ENCODE measurements at regions of chr12 and their contacts with region 1.

Region 1: GRCh38 chr12:49088190-49088931 is 6.2 kb downstream of the DHH start:
- DNase-seq: peak; percentile 93
- H3K4me3 ChIP-seq: peak overlapping the region; percentile 34
- H3K27ac ChIP-seq: no peak overlapping the region
- H3K4me1 ChIP-seq: peaks cover 9% of the 10 kb centered on the region
- H3K27me3 ChIP-seq: peaks cover 48% of the 10 kb centered on the region
- CTCF ChIP-seq: peak; percentile 96

Region 2: GRCh38 chr12:49060237-49061156 is 27.9 kb before region 1 on chr12 and contains the start of gene KMT2D:
- CTCF ChIA-PET with region 1: interaction called, 17 read pairs
- POLR2A ChIA-PET with region 1: no interaction called
- intact Hi-C with region 1: no loop called
- DNase-seq: peak; percentile 98
- H3K4me3 ChIP-seq: peak within 1 kb of the TSS; percentile 98
- H3K27ac ChIP-seq: peak within 1 kb of the TSS; percentile 100
- H3K4me1 ChIP-seq: peaks cover 18% of the 10 kb centered on the region
- H3K27me3 ChIP-seq: no peaks in the 10 kb centered on the region
- CTCF ChIP-seq: peak; percentile 29; the same call in 1 of the 2 replicates
- total RNA-seq, gene KMT2D: 121 and 138 TPM in 2 replicates

Region 3: GRCh38 chr12:49110464-49111155 is 22.2 kb after region 1 on chr12 and contains the start of gene LMBR1L:
- CTCF ChIA-PET with region 1: interaction called, 10 read pairs
- POLR2A ChIA-PET with region 1: no interaction called
- intact Hi-C with region 1: no loop called
- DNase-seq: peak; percentile 99
- H3K4me3 ChIP-seq: peak within 1 kb of the TSS; percentile 95
- H3K27ac ChIP-seq: peak within 1 kb of the TSS; percentile 81
- H3K4me1 ChIP-seq: peaks cover 8% of the 10 kb centered on the region
- H3K27me3 ChIP-seq: no peaks in the 10 kb centered on the region
- CTCF ChIP-seq: peak; percentile 49; the same call in 1 of the 2 replicates
- total RNA-seq, gene LMBR1L: 47.2 and 55.7 TPM in 2 replicates

Region 4: DNA sequence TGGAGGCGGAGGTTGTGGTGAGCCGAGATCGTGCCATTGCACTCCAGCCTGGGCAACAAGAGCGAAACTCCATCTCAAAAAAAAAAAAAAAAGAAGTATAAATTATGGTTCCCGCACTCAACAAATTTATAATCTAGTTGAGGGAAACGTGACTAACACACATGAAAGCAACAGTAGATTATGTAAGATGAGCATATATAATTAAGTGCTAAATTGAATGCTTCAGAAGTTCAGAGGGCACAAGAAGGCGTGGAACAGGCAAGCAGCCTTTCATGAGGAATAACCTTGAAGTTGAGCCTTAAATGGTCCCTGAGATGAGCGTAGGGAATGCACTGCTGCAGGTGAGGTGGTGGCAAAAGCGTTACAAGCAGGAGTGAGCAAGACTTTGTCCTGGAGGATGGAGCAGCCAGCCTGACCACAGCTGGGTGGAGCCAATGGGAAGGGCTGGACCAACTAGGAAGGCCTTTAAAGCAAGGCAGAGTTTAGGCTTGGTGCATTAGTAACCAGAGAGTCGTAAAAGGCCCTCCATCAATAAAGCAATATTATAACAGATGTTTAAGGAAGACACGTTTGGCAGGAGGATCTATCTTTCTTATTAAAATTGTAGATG is 131.2 kb after region 1 on chr12:
- CTCF ChIA-PET with region 1: no interaction called
- POLR2A ChIA-PET with region 1: interaction called, 20 read pairs
- intact Hi-C with region 1: no loop called
- DNase-seq: no peak
- H3K4me3 ChIP-seq: no peak overlapping the region
- H3K27ac ChIP-seq: no peak overlapping the region
- H3K4me1 ChIP-seq: peaks cover 15% of the 10 kb centered on the region
- H3K27me3 ChIP-seq: no peaks in the 10 kb centered on the region
- CTCF ChIP-seq: no peak

Region 5: GRCh38 chr12:49410818-49411217 is 322.5 kb after region 1 on chr12:
- CTCF ChIA-PET with region 1: no interaction called
- POLR2A ChIA-PET with region 1: no interaction called
- intact Hi-C with region 1: no loop called
- DNase-seq: no peak
- H3K4me3 ChIP-seq: no peak overlapping the region
- H3K27ac ChIP-seq: no peak overlapping the region
- H3K4me1 ChIP-seq: no peaks in the 10 kb centered on the region
- H3K27me3 ChIP-seq: no peaks in the 10 kb centered on the region
- CTCF ChIP-seq: no peak